MCF 10A (cell line): ENCODE measurements at regions of chr1 and their contacts with region 1.

Region 1: DNA sequence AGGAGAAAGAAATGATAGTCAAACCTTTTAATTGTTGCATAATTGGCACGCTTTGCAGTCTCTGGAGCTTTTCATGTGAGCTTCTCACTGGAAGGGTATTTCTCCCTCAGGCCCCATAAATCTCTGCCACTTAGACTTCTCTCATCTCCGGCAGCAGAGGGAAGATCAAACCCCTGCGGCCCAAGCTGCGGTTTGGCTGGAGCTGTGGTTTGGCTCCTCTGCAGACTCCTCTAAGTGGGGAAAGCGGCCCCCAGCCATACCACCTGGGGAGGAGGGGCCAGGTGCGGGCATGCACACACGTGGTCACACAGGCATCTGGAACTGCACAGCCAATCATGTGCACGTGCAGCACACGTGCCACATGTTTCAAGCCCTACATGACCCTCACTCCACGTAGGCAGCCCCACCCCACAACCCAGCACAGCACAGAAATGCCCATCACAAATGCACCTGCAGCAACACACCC is 58.3 kb downstream of the UBE2T start:
- DNase-seq: peak; percentile 100
- H3K4me3 Mint-ChIP-seq: peak overlapping the region; percentile 5
- H3K27ac Mint-ChIP-seq: peak overlapping the region; percentile 82
- H3K4me1 Mint-ChIP-seq: peaks cover 56% of the 10 kb centered on the region
- H3K27me3 Mint-ChIP-seq: peaks cover 14% of the 10 kb centered on the region
- CTCF ChIP-seq: no peak

Region 2: DNA sequence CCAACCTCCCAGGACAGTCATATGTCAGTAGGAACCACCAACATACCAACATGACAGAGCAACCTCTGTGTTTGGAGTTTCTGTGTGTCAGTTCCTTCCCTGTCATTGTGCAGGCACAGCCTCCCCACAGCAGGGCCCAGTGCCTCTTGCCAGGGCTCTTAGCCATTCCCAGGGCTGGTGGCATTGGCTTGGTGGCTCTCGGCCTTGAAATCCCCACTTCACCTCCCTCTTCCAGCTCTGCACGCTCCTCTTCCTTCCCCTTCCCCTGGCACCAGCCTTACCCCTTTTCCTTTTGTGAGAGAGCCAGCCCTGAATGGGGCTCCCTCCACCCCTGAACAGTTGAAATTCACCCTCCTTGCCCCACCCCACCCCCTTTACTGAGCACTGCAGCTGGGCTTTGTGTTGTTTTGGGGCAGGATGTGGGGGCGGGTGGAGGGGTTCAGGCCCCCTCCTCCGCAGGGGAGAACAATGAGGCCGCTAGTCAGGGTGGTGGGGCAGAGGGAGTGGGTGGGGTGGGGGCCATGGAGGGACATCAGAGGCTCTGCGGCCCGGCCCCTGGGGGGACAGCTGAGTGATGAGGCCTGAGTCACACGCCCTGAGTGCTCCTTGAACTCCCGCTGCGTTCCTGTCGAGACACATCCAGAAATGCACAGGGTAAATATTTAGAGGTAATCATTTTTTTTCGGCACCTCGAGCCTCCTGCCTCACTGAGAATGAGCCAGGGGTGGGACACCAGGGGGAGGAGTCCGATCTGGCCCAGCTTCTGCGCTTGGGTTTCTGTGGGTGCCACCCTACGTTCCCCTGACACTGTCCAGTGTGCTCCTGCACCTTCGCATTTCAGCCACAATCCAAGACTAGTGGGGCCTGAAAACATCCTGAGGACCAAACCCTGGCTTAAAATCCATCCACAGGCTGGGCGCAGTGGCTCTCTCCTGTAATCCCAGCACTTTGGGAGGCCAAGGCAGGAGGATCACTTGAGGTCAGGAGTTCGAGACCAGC is 61.2 kb before region 1 on chr1:
- CTCF ChIA-PET with region 1: no interaction called
- POLR2A ChIA-PET with region 1: interaction called, 17 read pairs
- intact Hi-C with region 1: no loop called
- DNase-seq: peak; percentile 90
- H3K4me3 Mint-ChIP-seq: no peak overlapping the region
- H3K27ac Mint-ChIP-seq: no peak overlapping the region
- H3K4me1 Mint-ChIP-seq: peaks cover 21% of the 10 kb centered on the region
- H3K27me3 Mint-ChIP-seq: peaks cover 23% of the 10 kb centered on the region
- CTCF ChIP-seq: no peak

Region 3: DNA sequence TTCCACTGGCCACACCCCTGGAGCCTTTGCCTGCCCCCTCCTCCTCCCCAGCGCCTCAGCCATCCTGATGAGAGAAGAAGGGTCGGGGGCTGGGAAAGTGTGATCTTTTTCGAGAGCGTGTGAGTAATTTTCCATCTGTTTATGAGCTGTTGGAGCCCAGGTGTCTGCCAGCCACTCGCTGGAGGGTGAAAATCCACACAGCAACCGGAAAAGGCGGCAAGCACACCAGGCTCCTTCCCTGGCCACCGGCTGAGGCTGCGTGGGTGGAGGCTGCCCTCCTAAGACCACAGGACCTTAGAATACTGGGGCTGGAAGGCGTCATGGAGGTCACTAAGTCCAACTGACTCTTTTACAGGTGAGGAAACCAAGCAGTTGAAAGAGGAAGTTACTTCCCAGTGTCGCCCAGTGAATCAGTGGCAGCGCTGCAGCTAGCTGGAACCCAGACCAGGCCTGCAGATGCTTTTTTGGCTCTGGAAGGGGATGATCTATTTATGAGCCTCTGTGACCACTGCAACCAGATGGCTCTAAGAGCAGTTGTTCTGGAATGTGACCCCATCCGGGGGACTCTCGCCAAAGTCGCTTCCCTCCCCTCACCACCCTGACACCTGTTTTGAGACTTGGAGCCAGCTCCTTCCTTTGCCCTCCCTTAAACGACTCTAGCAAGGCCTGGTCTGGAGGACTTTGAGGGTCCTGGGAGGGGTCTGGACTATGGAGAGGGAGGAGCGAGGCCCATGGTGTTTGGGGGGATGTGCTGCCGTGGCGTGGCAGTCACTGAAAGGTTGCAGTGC is 35.3 kb before region 1 on chr1:
- CTCF ChIA-PET with region 1: interaction called, 5 read pairs
- POLR2A ChIA-PET with region 1: interaction called, 13 read pairs
- intact Hi-C with region 1: no loop called
- DNase-seq: no peak
- H3K4me3 Mint-ChIP-seq: no peak overlapping the region
- H3K27ac Mint-ChIP-seq: no peak overlapping the region
- H3K4me1 Mint-ChIP-seq: peaks cover 12% of the 10 kb centered on the region
- H3K27me3 Mint-ChIP-seq: peaks cover 27% of the 10 kb centered on the region
- CTCF ChIP-seq: no peak

Region 4: DNA sequence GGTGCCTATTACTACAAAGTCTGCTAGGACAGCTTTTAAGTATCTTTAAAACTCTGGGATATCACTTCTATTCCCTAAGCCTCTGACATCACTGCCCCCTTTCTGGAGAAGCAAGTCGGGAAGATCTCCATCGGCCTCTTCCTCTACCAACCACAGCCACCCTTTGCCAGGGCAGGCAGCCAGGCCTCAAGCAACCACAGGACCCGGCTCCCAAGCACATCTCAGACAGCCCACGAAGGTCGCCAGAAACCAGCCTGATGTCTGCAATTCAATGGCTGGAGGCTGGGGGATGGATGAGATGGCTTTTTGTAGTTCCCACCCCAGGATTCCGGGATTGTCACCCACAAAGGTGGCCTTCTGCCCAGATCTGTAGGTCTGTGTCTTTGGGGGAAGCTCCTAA is 19.1 kb before region 1 on chr1:
- CTCF ChIA-PET with region 1: interaction called, 24 read pairs
- POLR2A ChIA-PET with region 1: interaction called, 10 read pairs
- intact Hi-C with region 1: no loop called
- DNase-seq: no peak
- H3K4me3 Mint-ChIP-seq: no peak overlapping the region
- H3K27ac Mint-ChIP-seq: no peak overlapping the region
- H3K4me1 Mint-ChIP-seq: no peaks in the 10 kb centered on the region
- H3K27me3 Mint-ChIP-seq: peaks cover 57% of the 10 kb centered on the region
- CTCF ChIP-seq: no peak